HCT116 (cell line): ENCODE measurements at regions of chr6 and their contacts with region 1.

Region 1: DNA sequence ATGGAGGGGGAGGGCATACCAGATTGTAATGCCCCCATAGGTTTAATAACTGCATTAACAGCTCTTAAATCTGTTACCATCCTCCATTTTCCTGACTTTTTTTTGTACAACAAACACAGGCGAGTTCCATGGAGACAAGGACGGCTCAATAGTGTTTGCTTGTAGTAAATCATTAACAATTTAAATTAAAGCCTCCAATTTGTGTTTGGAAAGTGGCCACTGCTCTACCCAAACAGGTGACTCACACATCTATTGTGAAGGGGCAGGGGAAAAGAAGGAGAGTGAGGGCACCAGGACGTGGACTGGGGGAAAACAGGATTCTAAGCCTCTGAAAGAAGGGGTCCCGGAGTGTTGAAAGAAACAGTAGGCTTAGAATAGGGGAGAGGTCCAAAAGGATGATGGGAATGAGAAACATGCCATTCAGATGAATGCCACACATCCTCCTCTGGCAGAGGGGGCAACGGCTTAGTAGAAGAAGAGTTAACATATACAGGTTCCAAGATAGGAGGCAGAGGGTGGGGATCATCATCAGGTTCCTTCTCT is 6.9 kb downstream of the GLYATL3 start:
- DNase-seq: no peak
- ATAC-seq: no peak
- H3K4me3 ChIP-seq: no peak overlapping the region
- H3K27ac ChIP-seq: no peak overlapping the region
- H3K4me1 ChIP-seq: no peaks in the 10 kb centered on the region
- H3K27me3 ChIP-seq: no peaks in the 10 kb centered on the region
- CTCF ChIP-seq: no peak
- POLR2A ChIP-seq: no peak
- RAD21 ChIP-seq: no peak

Region 2: GRCh38 chr6:49198015-49198414 is 308.6 kb before region 1 on chr6:
- CTCF ChIA-PET with region 1: no interaction called
- POLR2A ChIA-PET with region 1: no interaction called
- RAD21 ChIA-PET with region 1: no interaction called
- intact Hi-C with region 1: loop called (anchors 5 kb)
- DNase-seq: no peak
- ATAC-seq: no peak
- H3K4me3 ChIP-seq: no peak overlapping the region
- H3K27ac ChIP-seq: no peak overlapping the region
- H3K4me1 ChIP-seq: no peaks in the 10 kb centered on the region
- H3K27me3 ChIP-seq: no peaks in the 10 kb centered on the region
- CTCF ChIP-seq: no peak
- POLR2A ChIP-seq: no peak
- RAD21 ChIP-seq: no peak